CD8-positive, alpha-beta T cell (primary cell): ENCODE measurements at regions of chr5 and their contacts with region 1.

Region 1: GRCh38 chr5:100424787-100425186 is 110.4 kb upstream of the FAM174A start:
- DNase-seq: no peak
- ATAC-seq: no peak
- H3K4me3 ChIP-seq: no peak overlapping the region
- H3K4me3 Mint-ChIP-seq: no peak overlapping the region
- H3K27ac ChIP-seq: no peak overlapping the region
- H3K27ac Mint-ChIP-seq: no peak overlapping the region
- H3K4me1 ChIP-seq: no peaks in the 10 kb centered on the region
- H3K4me1 Mint-ChIP-seq: no peaks in the 10 kb centered on the region
- H3K27me3 ChIP-seq: no peaks in the 10 kb centered on the region
- H3K27me3 Mint-ChIP-seq: no peaks in the 10 kb centered on the region
- CTCF ChIP-seq: no peak

Region 2: GRCh38 chr5:99721506-99721905 is 703.3 kb before region 1 on chr5:
- CTCF ChIA-PET with region 1: no interaction called
- POLR2A ChIA-PET with region 1: no interaction called
- intact Hi-C with region 1: no loop called
- DNase-seq: no peak
- ATAC-seq: no peak
- H3K4me3 ChIP-seq: no peak overlapping the region
- H3K4me3 Mint-ChIP-seq: no peak overlapping the region
- H3K27ac ChIP-seq: no peak overlapping the region
- H3K27ac Mint-ChIP-seq: no peak overlapping the region
- H3K4me1 ChIP-seq: no peaks in the 10 kb centered on the region
- H3K4me1 Mint-ChIP-seq: no peaks in the 10 kb centered on the region
- H3K27me3 ChIP-seq: no peaks in the 10 kb centered on the region
- H3K27me3 Mint-ChIP-seq: no peaks in the 10 kb centered on the region
- CTCF ChIP-seq: no peak

Region 3: DNA sequence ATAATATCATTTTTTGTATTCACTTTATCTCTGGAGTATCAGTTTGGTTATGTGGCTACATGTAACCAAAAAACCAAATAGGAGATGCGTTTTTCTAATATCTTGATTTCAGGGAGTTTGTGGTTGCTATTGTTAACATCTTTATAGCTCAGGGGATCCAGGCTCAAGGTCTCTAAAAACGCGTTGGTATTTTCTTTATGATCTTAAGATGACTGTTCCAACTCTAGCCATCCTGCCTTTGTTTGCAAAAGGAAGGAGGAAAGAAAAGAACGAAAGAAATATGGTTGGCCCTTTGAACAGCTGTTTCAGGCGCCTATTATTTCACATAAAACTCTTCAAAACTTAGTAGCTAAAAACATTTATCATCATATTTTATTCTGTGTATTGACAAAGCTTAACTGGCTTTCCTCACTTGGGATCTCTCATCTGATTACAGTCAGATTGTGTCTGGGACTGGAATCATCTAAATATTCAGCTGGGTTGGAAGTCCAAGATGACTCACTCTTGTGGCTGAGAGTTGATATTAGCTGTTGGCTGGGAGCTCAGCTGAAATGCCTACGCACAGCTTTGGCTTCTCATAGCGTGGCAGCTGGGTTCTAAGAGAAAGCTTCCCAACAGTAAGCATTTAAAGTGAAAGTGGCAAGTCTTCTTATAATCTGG is 170.5 kb after region 1 on chr5:
- CTCF ChIA-PET with region 1: no interaction called
- POLR2A ChIA-PET with region 1: no interaction called
- intact Hi-C with region 1: no loop called
- DNase-seq: no peak
- ATAC-seq: no peak
- H3K4me3 ChIP-seq: no peak overlapping the region
- H3K4me3 Mint-ChIP-seq: no peak overlapping the region
- H3K27ac ChIP-seq: no peak overlapping the region
- H3K27ac Mint-ChIP-seq: no peak overlapping the region
- H3K4me1 ChIP-seq: no peaks in the 10 kb centered on the region
- H3K4me1 Mint-ChIP-seq: no peaks in the 10 kb centered on the region
- H3K27me3 ChIP-seq: no peaks in the 10 kb centered on the region
- H3K27me3 Mint-ChIP-seq: no peaks in the 10 kb centered on the region
- CTCF ChIP-seq: no peak

Region 4: DNA sequence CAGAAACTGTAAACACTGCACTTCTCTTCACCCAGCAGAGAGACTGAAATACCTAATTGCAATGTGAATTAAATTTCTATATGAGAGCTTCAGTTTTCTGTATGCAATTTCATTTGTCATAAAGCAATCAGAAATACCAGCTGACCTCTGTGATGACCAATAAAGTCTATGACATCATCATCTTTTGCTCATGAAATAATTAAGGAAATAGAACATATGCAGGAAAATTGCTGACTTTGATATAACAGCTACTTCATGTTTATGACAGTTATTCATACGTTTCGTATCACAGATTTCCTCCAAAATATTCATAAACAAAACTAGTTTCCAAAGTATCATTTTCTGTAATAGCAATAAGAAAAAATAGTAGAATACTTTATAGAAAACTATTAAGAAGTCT is 1219.0 kb after region 1 on chr5:
- CTCF ChIA-PET with region 1: no interaction called
- POLR2A ChIA-PET with region 1: no interaction called
- intact Hi-C with region 1: no loop called
- DNase-seq: no peak
- ATAC-seq: no peak
- H3K4me3 ChIP-seq: no peak overlapping the region
- H3K4me3 Mint-ChIP-seq: no peak overlapping the region
- H3K27ac ChIP-seq: no peak overlapping the region
- H3K27ac Mint-ChIP-seq: no peak overlapping the region
- H3K4me1 ChIP-seq: no peaks in the 10 kb centered on the region
- H3K4me1 Mint-ChIP-seq: no peaks in the 10 kb centered on the region
- H3K27me3 ChIP-seq: no peaks in the 10 kb centered on the region
- H3K27me3 Mint-ChIP-seq: no peaks in the 10 kb centered on the region
- CTCF ChIP-seq: no peak

Region 5: DNA sequence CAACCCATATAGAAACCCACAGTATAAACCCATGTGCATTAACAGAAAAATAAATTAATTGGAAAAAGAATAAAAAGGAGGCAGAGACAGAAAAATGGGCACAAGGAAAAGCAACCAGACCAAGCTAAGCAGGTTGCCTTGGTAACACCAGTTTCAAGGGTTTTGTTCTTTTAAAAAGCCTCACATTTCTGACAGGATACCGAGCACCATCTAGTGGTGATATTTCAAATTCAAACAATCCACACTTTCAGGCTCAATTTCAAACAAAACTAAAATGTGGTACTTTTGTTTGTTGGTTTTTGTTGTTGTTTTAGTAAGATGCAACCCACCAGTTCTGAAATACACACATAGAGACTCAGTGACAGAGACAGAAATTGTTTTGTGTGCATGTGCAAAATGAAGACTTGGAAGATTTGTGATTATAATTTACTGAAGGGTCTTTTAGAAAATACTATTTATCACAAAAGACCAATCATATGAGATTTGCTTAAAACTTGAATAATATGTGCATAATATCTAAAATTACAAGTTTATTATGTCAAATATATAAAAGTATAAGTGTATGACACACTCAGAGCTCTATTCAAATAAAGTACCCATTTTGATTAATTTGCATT is 1553.0 kb after region 1 on chr5:
- CTCF ChIA-PET with region 1: no interaction called
- POLR2A ChIA-PET with region 1: no interaction called
- intact Hi-C with region 1: loop called in 1 of 2 experiments (anchors 5 kb)
- DNase-seq: peak in 2 of 9 experiments; percentile 7 to 26
- ATAC-seq: no peak
- H3K4me3 ChIP-seq: no peak overlapping the region
- H3K4me3 Mint-ChIP-seq: no peak overlapping the region
- H3K27ac ChIP-seq: no peak overlapping the region
- H3K27ac Mint-ChIP-seq: no peak overlapping the region
- H3K4me1 ChIP-seq: no peaks in the 10 kb centered on the region
- H3K4me1 Mint-ChIP-seq: no peaks in the 10 kb centered on the region
- H3K27me3 ChIP-seq: no peaks in the 10 kb centered on the region
- H3K27me3 Mint-ChIP-seq: peaks cover 3% of the 10 kb centered on the region
- CTCF ChIP-seq: peak; percentile 44